ENCODE measurements at regions of chr3 and their contacts with region 1.

Region 1: GRCh38 chr3:188683032-188683521 is 488.7 kb upstream of the TPRG1 start:
- DNase-seq: no peak

Region 2: GRCh38 chr3:188772886-188773285 is 89.8 kb after region 1 on chr3:
- intact Hi-C with region 1: loop called (anchors 10 kb)
- DNase-seq: no peak

Region 3: DNA sequence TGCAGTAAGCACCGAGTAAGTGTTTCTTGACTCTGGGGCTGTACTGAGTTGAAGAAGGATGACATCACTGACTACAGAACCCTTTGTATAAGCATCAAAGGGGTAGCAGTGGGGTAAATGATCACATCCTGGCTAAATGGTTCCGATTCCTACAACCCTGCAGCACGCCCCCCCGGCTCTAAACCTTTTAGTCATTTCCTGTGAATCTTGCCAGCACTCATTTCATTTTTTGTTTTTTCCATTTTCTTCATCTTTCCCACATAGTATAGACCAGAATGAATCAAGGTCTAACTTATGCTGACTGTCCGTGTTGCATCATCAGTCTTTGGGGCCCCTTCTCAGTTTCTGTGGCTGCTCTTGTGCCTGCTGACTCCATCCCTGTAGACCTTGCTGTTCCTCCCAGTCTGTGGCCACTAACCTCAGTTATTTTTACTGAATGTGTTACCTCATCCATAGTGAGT is 105.6 kb after region 1 on chr3:
- intact Hi-C with region 1: no loop called
- DNase-seq: no peak